WTC11 (cell line): ENCODE measurements at regions of chr5 and their contacts with region 1.

Region 1: DNA sequence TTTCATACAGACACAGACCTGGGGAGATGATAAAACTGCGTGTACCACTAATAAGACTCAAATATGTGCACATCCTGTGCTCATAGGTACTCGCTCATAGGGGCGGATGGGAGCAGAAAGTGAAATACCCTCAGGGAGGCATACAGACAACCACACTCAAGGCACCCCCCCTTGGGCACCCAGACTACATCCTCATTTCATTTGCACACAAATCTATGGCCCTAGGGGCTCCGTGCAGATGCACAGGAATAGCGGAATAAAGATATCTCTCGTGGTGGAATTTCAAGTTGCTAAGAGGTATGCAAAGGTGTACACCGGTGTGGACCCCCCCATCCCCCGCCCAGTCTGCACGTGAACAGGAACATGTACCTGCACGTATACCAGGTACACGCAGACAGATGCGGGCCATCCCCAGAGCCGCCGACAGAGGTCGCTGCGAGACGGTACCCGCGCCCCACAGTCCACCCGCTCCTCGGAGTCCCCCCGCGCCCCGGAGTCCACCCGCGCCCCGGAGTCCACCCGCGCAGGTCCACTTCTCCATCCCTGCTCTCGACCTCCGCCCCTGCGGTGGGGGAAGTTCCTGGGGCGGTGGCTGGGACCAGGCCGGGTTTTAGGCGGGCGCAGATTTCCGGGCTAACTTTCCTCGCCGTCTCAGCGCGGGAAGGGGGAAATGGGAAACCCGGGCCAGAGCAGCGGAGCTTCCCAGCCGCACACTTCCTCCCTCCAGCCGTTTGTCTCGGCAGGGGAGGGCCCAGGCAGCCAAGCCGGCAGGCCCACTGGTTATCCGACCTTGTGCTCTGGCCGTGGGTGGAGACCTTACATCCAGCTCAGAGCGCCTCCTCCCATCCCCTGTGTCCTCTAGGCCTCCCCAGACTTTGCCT is 1.0 kb upstream of the IL12B start:
- DNase-seq: peak; percentile 82
- ATAC-seq: peak; percentile 90
- H3K4me3 Mint-ChIP-seq: peak overlapping the region; percentile 75
- H3K27ac Mint-ChIP-seq: no peak overlapping the region
- H3K4me1 Mint-ChIP-seq: peaks cover 13% of the 10 kb centered on the region
- H3K27me3 Mint-ChIP-seq: no peaks in the 10 kb centered on the region; the same call in 1 of the 2 replicates
- CTCF ChIP-seq: peak; percentile 89

Region 2: DNA sequence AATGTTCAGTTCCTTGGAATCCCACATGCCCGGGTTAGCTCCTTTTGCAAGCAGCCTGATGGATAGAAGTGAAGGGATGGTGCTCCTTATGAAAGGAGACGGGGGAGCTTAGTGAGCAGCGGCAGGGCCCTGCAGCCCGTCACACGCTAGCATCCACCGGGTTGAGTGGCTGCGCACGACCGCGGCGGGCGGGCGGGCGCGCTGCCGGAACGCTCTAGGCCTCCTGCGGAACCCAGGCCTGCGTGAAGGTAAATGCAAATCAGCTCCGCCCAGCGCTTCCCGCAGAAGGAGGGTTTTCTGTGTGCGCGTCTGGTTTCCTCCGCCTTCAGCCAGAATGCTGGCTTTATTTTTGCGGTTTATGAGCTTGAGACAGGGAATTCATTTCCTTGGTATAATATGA is 20.8 kb before region 1 on chr5:
- CTCF ChIA-PET with region 1: interaction called, 15 read pairs
- POLR2A ChIA-PET with region 1: no interaction called
- DNase-seq: peak; percentile 70
- ATAC-seq: peak; percentile 96
- H3K4me3 Mint-ChIP-seq: peak overlapping the region; percentile 66
- H3K27ac Mint-ChIP-seq: no peak overlapping the region
- H3K4me1 Mint-ChIP-seq: peaks cover 13% of the 10 kb centered on the region
- H3K27me3 Mint-ChIP-seq: peaks cover 33% of the 10 kb centered on the region
- CTCF ChIP-seq: no peak

Region 3: GRCh38 chr5:159316519-159317383 is 14.6 kb before region 1 on chr5:
- CTCF ChIA-PET with region 1: interaction called, 15 read pairs
- POLR2A ChIA-PET with region 1: no interaction called
- DNase-seq: peak; percentile 46
- ATAC-seq: peak; percentile 96
- H3K4me3 Mint-ChIP-seq: no peak overlapping the region
- H3K27ac Mint-ChIP-seq: no peak overlapping the region
- H3K4me1 Mint-ChIP-seq: no peaks in the 10 kb centered on the region
- H3K27me3 Mint-ChIP-seq: peaks cover 2% of the 10 kb centered on the region
- CTCF ChIP-seq: 0 out of 2 replicates have a peak, but pooled peaks have one; percentile 29